ENCODE measurements at regions of chr6 and their contacts with region 1.

Region 1: DNA sequence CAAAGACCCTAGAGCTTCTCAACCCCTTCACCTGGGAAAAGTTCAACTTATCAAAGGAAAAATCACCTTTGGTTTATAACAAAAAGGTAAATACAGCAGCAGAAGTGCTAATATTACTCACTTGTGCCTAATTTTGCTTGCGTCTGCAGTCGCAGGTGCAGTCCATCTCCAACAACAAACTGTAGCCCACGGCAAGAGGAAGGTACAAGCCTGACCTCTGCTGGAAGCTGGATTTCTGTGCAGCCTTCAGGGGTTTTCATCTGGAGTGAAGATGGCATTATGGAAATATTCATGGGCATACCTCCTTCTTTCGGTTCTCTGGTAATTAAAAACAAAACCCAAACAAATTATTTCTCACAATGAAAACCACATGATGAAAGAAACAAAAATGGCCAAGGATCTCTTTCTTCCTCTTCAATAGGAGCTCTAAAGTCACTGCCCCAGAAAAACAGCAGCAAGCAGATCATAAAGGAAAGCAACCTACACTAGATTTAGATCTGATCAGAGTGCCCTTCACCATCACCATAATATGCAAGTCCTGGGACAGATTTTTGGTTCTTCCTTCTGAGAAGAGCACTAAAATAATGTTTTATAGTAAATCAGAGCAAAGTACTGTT is 7.8 kb downstream of the UBE3D start:
- DNase-seq: peak; percentile 58
- H3K4me3 Mint-ChIP-seq: no peak overlapping the region
- H3K27ac Mint-ChIP-seq: no peak overlapping the region
- H3K4me1 Mint-ChIP-seq: no peaks in the 10 kb centered on the region
- H3K27me3 Mint-ChIP-seq: no peaks in the 10 kb centered on the region
- CTCF ChIP-seq: peak; percentile 71

Region 2: DNA sequence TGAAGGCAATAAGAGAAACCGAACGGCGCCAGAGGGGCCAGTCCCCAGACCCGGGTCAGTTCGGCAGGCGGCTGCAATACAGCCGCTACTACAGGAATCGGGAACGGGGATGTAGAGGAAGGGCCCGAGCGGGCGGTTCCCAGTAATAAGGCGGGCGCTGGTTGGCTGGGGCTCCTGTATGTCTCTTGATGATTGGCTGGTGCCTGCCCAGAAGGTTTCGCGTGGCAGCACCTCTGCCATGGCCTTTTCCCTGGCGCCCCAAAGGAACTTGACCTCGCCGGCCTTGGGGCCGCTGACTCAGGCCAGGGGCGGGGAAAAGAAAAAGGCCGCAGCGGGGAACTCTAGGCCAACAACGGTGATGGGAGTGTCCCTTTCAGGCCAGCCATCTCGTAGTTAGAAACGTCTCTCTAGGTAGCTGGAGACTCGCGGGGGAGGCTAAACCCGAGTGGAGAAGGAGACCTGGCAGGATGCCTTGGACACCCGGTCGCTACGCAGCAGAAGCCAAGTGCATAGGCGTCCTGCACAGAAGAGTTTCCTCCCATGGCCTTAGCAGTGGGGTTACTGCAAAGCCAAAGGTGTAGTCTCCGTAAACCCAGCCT is 810.1 kb before region 1 on chr6 and contains the start of gene IBTK:
- CTCF ChIA-PET with region 1: interaction called, 4 read pairs
- intact Hi-C with region 1: loop called (anchors 1 kb)
- DNase-seq: peak; percentile 95
- H3K4me3 Mint-ChIP-seq: peak within 1 kb of the TSS; percentile 90
- H3K27ac Mint-ChIP-seq: peak within 1 kb of the TSS; percentile 99
- H3K4me1 Mint-ChIP-seq: peaks cover 19% of the 10 kb centered on the region
- H3K27me3 Mint-ChIP-seq: no peaks in the 10 kb centered on the region
- CTCF ChIP-seq: no peak
- total RNA-seq, gene IBTK: 48.3 and 54.9 TPM in 2 replicates

Region 3: GRCh38 chr6:82270881-82271645 is 786.8 kb before region 1 on chr6:
- CTCF ChIA-PET with region 1: no interaction called
- intact Hi-C with region 1: loop called (anchors 1 kb)
- DNase-seq: no peak
- H3K4me3 Mint-ChIP-seq: no peak overlapping the region
- H3K27ac Mint-ChIP-seq: no peak overlapping the region
- H3K4me1 Mint-ChIP-seq: no peaks in the 10 kb centered on the region
- H3K27me3 Mint-ChIP-seq: no peaks in the 10 kb centered on the region
- CTCF ChIP-seq: no peak

Region 4: GRCh38 chr6:82363351-82364086 is 694.3 kb before region 1 on chr6 and contains the start of gene TPBG:
- CTCF ChIA-PET with region 1: no interaction called
- intact Hi-C with region 1: loop called (anchors 5 kb)
- DNase-seq: peak; percentile 77
- H3K4me3 Mint-ChIP-seq: peak within 1 kb of the TSS; percentile 83
- H3K27ac Mint-ChIP-seq: peak within 1 kb of the TSS; percentile 66
- H3K4me1 Mint-ChIP-seq: peaks cover 9% of the 10 kb centered on the region
- H3K27me3 Mint-ChIP-seq: no peaks in the 10 kb centered on the region
- CTCF ChIP-seq: peak; percentile 21
- total RNA-seq, gene TPBG: 42.6 and 46.5 TPM in 2 replicates

Region 5: GRCh38 chr6:82589509-82590206 is 468.2 kb before region 1 on chr6:
- CTCF ChIA-PET with region 1: no interaction called
- intact Hi-C with region 1: loop called (anchors 2 kb)
- DNase-seq: peak; percentile 24
- H3K4me3 Mint-ChIP-seq: no peak overlapping the region
- H3K27ac Mint-ChIP-seq: no peak overlapping the region
- H3K4me1 Mint-ChIP-seq: peaks cover 24% of the 10 kb centered on the region
- H3K27me3 Mint-ChIP-seq: no peaks in the 10 kb centered on the region
- CTCF ChIP-seq: no peak

Region 6: GRCh38 chr6:82607998-82608725 is 449.7 kb before region 1 on chr6:
- CTCF ChIA-PET with region 1: no interaction called
- intact Hi-C with region 1: loop called (anchors 5 kb)
- DNase-seq: no peak
- H3K4me3 Mint-ChIP-seq: no peak overlapping the region
- H3K27ac Mint-ChIP-seq: no peak overlapping the region
- H3K4me1 Mint-ChIP-seq: no peaks in the 10 kb centered on the region
- H3K27me3 Mint-ChIP-seq: no peaks in the 10 kb centered on the region
- CTCF ChIP-seq: no peak

Region 7: GRCh38 chr6:82836007-82836575 is 221.7 kb before region 1 on chr6:
- CTCF ChIA-PET with region 1: no interaction called
- intact Hi-C with region 1: loop called (anchors 10 kb)
- DNase-seq: no peak
- H3K4me3 Mint-ChIP-seq: no peak overlapping the region
- H3K27ac Mint-ChIP-seq: no peak overlapping the region
- H3K4me1 Mint-ChIP-seq: peaks cover 14% of the 10 kb centered on the region
- H3K27me3 Mint-ChIP-seq: no peaks in the 10 kb centered on the region
- CTCF ChIP-seq: no peak

Region 8: DNA sequence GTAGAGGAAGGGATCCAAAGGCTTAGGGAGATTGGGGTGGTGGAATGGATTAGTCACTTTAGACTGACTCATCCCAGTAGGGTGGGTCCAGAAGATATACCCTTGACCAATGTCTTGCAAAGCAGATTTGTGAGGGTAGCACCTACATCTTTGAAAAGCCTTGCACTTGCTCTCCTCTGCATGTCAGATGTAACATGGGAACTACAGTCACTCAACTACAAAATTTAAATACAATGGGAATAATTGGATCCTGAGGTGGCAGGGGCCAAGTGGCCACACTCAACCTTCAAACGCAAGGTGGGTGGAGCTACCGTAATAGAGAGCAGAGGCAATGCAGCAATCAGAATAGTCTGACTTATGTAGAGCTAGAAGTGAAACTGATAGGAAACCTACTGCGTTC is 301.8 kb after region 1 on chr6:
- CTCF ChIA-PET with region 1: no interaction called
- intact Hi-C with region 1: no loop called
- DNase-seq: no peak
- H3K4me3 Mint-ChIP-seq: no peak overlapping the region
- H3K27ac Mint-ChIP-seq: no peak overlapping the region
- H3K4me1 Mint-ChIP-seq: peaks cover 13% of the 10 kb centered on the region
- H3K27me3 Mint-ChIP-seq: no peaks in the 10 kb centered on the region
- CTCF ChIP-seq: no peak

Measured in Calu3 (cell line).